ENCODE measurements at regions of chrX and their contacts with region 1.

Region 1: GRCh38 chrX:153885968-153886903 is at the start of gene L1CAM:
- DNase-seq: no peak
- H3K4me3 ChIP-seq: no peak within 1 kb of the TSS
- H3K27ac ChIP-seq: no peak within 1 kb of the TSS
- H3K4me1 ChIP-seq: 0 out of 2 replicates have a peak, but pooled peaks cover 12% of the 10 kb centered on the region
- H3K27me3 ChIP-seq: peaks cover 11% of the 10 kb centered on the region
- CTCF ChIP-seq: no peak
- total RNA-seq, gene L1CAM: 68.8 and 79.0 TPM in 2 replicates

Region 2: DNA sequence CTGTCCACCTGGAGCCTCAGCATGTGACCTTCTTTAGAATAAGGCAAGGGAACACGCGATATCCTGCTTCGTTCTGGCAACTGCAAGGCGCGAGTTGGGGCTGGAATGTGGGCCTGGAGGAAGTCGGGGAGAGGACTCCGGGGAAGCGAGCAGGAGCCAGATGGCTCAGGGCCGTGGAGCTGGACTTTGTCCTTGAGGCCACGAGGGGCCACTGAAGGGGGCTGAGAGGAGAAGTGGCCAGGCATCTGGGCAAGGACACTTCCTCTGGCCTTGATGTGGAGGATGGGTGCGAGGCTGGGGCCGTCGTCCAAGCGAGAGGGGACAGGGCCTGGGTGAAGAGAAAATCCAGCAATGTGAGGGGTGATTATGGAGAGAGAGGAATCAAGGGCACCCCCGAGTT is 251.4 kb before region 1 on chrX:
- CTCF ChIA-PET with region 1: interaction called, 12 read pairs
- POLR2A ChIA-PET with region 1: no interaction called
- intact Hi-C with region 1: no loop called
- DNase-seq: no peak
- H3K4me3 ChIP-seq: no peak overlapping the region
- H3K27ac ChIP-seq: no peak overlapping the region
- H3K4me1 ChIP-seq: no peaks in the 10 kb centered on the region
- H3K27me3 ChIP-seq: peaks cover 75% of the 10 kb centered on the region
- CTCF ChIP-seq: no peak

Region 3: GRCh38 chrX:153708415-153708814 is 177.8 kb before region 1 on chrX:
- CTCF ChIA-PET with region 1: no interaction called
- POLR2A ChIA-PET with region 1: no interaction called
- intact Hi-C with region 1: loop called (anchors 10 kb)
- DNase-seq: peak; percentile 90 to 92
- H3K4me3 ChIP-seq: no peak overlapping the region
- H3K27ac ChIP-seq: peak overlapping the region; percentile 74
- H3K4me1 ChIP-seq: peaks cover 17% of the 10 kb centered on the region
- H3K27me3 ChIP-seq: no peaks in the 10 kb centered on the region
- CTCF ChIP-seq: peak; percentile 78

Region 4: DNA sequence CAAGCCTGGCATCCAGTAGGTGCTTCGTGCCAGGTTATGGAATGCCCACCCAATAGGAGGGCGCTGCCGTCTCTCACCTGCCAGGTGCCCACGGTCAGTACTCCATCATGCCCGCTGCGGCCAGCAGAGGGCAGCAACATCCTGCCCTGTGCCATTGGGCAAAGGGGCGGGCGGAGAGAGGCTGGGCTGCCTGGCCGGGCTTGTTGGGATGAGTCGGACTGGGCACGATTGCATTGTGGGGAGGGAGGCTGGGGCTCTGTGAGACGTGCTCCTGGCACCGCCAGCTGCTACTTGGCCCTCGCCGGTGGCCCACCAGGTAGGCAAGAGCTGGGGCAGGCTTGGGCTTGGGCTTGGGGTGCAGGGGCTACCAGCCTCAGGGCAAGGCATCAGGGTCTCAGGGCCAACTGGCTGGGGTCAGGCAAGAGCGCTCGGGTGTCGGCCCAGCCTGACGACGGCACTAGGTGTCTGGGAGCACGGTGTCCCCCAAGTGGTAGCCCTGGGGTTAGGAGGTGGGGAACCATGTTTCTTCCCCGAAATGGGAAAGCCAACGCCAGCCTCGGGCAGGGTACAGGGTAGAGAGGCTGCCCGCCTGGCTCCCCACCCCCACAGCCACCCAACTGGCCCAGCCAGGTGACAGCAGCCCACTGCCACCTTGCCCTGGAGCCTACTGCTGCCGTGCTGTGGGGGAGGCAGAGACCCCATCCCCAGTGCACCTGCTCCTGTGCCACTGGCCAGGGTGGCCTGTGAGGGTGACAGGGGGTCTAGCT is 122.1 kb before region 1 on chrX and contains the start of gene PLXNB3:
- CTCF ChIA-PET with region 1: interaction called, 3 read pairs
- POLR2A ChIA-PET with region 1: no interaction called
- intact Hi-C with region 1: loop called (anchors 1 kb)
- DNase-seq: peak; percentile 68 to 95
- H3K4me3 ChIP-seq: peak within 1 kb of the TSS; percentile 52; the same call in 1 of the 2 replicates
- H3K27ac ChIP-seq: no peak within 1 kb of the TSS
- H3K4me1 ChIP-seq: peaks cover 7% of the 10 kb centered on the region; the same call in 1 of the 2 replicates
- H3K27me3 ChIP-seq: no peaks in the 10 kb centered on the region
- CTCF ChIP-seq: peak; percentile 86
- total RNA-seq, gene PLXNB3: 39.4 and 41.4 TPM in 2 replicates

Region 5: GRCh38 chrX:153794018-153794896 is 92.0 kb before region 1 on chrX and contains the starts of genes IDH3G and SSR4:
- CTCF ChIA-PET with region 1: no interaction called
- POLR2A ChIA-PET with region 1: no interaction called
- intact Hi-C with region 1: loop called (anchors 10 kb)
- DNase-seq: peak; percentile 86 to 97
- H3K4me3 ChIP-seq: peak within 1 kb of the TSS; percentile 93
- H3K27ac ChIP-seq: peak within 1 kb of the TSS; percentile 58
- H3K4me1 ChIP-seq: peaks cover 15% of the 10 kb centered on the region; the same call in 1 of the 2 replicates
- H3K27me3 ChIP-seq: no peaks in the 10 kb centered on the region
- CTCF ChIP-seq: no peak; the same call in 1 of the 2 replicates
- total RNA-seq, gene IDH3G: 47.7 and 63.4 TPM in 2 replicates
- total RNA-seq, gene SSR4: 223 and 310 TPM in 2 replicates

Region 6: GRCh38 chrX:153900831-153901752 is 14.9 kb after region 1 on chrX:
- CTCF ChIA-PET with region 1: interaction called, 5 read pairs
- POLR2A ChIA-PET with region 1: no interaction called
- intact Hi-C with region 1: loop called (anchors 2 kb)
- DNase-seq: peak; percentile 79 to 83
- H3K4me3 ChIP-seq: no peak overlapping the region
- H3K27ac ChIP-seq: 0 out of 2 replicates have a peak overlapping the region, but pooled peaks have one; percentile 16
- H3K4me1 ChIP-seq: peaks cover 25% of the 10 kb centered on the region
- H3K27me3 ChIP-seq: no peaks in the 10 kb centered on the region
- CTCF ChIP-seq: no peak

Region 7: DNA sequence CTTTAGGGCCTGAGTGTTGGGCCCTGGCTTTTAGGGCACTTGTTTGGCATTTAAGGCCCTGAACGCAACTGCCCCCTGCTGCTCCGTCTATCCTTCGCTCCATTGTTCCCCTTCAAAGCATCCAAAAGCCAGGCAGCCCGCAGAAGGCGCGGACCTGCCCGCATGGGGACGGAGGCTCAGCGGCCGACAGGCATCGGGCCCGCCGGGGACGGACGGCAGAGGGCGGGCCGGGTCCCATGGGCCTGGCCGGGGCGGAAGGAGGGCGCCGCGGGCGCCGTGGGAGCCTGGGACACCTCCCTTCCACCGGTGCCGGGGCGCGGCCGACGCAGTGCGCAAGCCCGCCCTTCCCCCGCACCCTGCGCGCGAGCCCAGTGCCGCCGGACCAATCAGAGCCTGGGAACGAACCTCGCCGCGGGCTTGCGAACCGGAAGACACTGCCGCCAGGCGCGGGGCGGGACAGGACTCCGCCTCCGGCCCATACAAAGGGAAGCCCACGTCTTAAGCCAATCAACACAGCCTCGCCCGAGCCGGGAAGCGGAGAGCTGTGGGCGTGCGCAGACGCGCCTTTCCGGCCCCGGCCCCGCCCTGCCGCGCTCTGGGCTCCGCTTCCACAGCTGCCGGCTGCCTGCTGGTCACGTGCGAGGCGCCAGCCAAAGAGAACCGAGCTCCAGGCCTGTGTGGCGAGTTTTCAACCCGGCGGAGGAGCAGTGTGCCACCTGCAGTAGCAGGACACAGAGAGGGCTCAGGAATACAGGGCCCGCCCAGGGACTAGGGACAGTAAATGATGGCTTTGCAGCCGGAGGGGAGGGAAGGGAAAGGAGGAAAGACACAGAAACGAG is 41.9 kb after region 1 on chrX:
- CTCF ChIA-PET with region 1: no interaction called
- POLR2A ChIA-PET with region 1: no interaction called
- intact Hi-C with region 1: loop called (anchors 2 kb)
- DNase-seq: peak; percentile 92 to 99
- H3K4me3 ChIP-seq: peak overlapping the region; percentile 86
- H3K27ac ChIP-seq: peak overlapping the region; percentile 86
- H3K4me1 ChIP-seq: peaks cover 17% of the 10 kb centered on the region; the same call in 1 of the 2 replicates
- H3K27me3 ChIP-seq: no peaks in the 10 kb centered on the region
- CTCF ChIP-seq: no peak; the same call in 1 of the 2 replicates

Region 8: GRCh38 chrX:154113729-154114128 is 227.5 kb after region 1 on chrX:
- CTCF ChIA-PET with region 1: no interaction called
- POLR2A ChIA-PET with region 1: no interaction called
- intact Hi-C with region 1: no loop called
- DNase-seq: no peak
- H3K4me3 ChIP-seq: no peak overlapping the region
- H3K27ac ChIP-seq: no peak overlapping the region
- H3K4me1 ChIP-seq: 0 out of 2 replicates have a peak, but pooled peaks cover 8% of the 10 kb centered on the region
- H3K27me3 ChIP-seq: no peaks in the 10 kb centered on the region
- CTCF ChIP-seq: no peak

Measured in PC-9 (cell line).